Activated CD8-positive, alpha-beta T cell treated with anti-CD3 and anti-CD28 coated beads for 36 hours (primary cell): ENCODE measurements at regions of chr19 and their contacts with region 1.

Region 1: DNA sequence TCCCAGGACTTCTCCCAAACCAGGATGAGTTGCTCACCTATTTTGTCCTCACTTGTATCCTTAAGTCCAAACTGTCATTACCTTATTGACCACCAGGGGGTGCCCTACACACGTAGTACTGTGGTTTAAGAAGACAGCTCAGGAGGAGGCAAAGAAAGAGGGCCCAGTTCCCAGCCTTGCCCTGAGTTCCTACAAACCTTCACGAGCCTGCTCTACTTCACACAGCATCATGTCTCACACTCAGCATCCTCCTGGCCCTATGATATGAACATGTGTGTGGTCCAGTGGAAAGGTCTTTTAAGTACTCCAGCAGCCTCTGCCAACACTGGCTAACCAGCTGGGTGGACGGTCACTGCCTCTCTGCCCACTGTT is 8.1 kb upstream of the ZNF784 start:
- DNase-seq: peak; percentile 98
- ATAC-seq: peak; percentile 55
- H3K4me3 Mint-ChIP-seq: no peak overlapping the region
- H3K27ac Mint-ChIP-seq: peak overlapping the region; percentile 63
- H3K4me1 Mint-ChIP-seq: peaks cover 34% of the 10 kb centered on the region
- H3K27me3 Mint-ChIP-seq: peaks cover 4% of the 10 kb centered on the region
- CTCF ChIP-seq: peak; percentile 75

Region 2: DNA sequence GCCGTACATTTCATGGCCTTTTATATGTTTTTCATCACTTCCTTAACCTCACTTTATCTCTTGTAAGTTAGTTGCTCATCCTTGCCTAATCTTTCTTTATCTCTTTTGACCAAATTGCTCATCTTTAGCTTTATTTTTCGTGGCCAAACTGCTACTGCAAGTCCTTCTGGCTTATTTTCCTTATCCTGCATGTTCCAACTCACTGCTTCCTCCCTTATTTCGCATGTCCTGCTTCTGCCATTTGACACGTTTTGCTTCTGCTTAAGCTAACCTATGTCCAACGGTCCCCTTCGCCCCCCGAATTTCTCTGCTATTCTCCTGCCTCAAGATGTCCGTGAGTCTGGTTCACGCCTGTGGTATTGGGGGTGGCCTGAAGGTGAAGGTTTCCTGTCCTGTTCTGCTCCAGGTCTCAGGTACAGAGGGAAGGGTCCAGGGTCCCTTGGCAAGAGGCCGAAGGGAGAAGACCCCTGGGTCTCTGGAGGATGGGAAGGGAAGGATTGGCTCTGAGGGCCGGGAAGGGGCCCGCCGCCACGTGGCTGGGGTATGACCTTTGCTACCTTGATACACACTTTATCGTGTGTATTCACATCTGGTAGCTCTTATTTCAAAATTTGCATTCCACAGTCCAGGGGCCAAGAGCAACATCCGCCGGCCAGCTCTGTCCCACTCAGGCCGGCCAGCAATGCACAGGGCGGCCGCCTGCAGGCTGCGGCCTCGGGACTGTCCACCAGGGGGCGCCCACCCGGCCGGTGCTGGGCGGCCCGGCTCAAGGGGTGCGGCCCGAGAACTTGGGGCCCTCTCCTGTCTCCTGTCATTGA is 165.0 kb before region 1 on chr19:
- CTCF ChIA-PET with region 1: interaction called, 38 read pairs
- POLR2A ChIA-PET with region 1: no interaction called
- intact Hi-C with region 1: no loop called
- DNase-seq: peak; percentile 69
- ATAC-seq: peak; percentile 98
- H3K4me3 Mint-ChIP-seq: no peak overlapping the region
- H3K27ac Mint-ChIP-seq: no peak overlapping the region
- H3K4me1 Mint-ChIP-seq: peaks cover 5% of the 10 kb centered on the region
- H3K27me3 Mint-ChIP-seq: no peaks in the 10 kb centered on the region
- CTCF ChIP-seq: peak; percentile 98

Region 3: GRCh38 chr19:55516878-55517620 is 115.4 kb before region 1 on chr19:
- CTCF ChIA-PET with region 1: interaction called, 35 read pairs
- POLR2A ChIA-PET with region 1: interaction called, 3 read pairs
- intact Hi-C with region 1: loop called (anchors 5 kb)
- DNase-seq: peak; percentile 94
- ATAC-seq: peak; percentile 100
- H3K4me3 Mint-ChIP-seq: peak overlapping the region; percentile 55
- H3K27ac Mint-ChIP-seq: peak overlapping the region; percentile 51
- H3K4me1 Mint-ChIP-seq: peaks cover 3% of the 10 kb centered on the region
- H3K27me3 Mint-ChIP-seq: no peaks in the 10 kb centered on the region
- CTCF ChIP-seq: peak; percentile 66

Region 4: GRCh38 chr19:55599468-55600279 is 32.8 kb before region 1 on chr19 and contains the start of gene FIZ1:
- CTCF ChIA-PET with region 1: interaction called, 24 read pairs
- POLR2A ChIA-PET with region 1: interaction called, 3 read pairs
- intact Hi-C with region 1: no loop called
- DNase-seq: peak; percentile 98
- ATAC-seq: peak; percentile 74
- H3K4me3 Mint-ChIP-seq: peak within 1 kb of the TSS; percentile 88
- H3K27ac Mint-ChIP-seq: peak within 1 kb of the TSS; percentile 99
- H3K4me1 Mint-ChIP-seq: peaks cover 30% of the 10 kb centered on the region
- H3K27me3 Mint-ChIP-seq: no peaks in the 10 kb centered on the region
- CTCF ChIP-seq: no peak
- total RNA-seq, gene FIZ1: 11.4 to 13.2 TPM

Region 5: DNA sequence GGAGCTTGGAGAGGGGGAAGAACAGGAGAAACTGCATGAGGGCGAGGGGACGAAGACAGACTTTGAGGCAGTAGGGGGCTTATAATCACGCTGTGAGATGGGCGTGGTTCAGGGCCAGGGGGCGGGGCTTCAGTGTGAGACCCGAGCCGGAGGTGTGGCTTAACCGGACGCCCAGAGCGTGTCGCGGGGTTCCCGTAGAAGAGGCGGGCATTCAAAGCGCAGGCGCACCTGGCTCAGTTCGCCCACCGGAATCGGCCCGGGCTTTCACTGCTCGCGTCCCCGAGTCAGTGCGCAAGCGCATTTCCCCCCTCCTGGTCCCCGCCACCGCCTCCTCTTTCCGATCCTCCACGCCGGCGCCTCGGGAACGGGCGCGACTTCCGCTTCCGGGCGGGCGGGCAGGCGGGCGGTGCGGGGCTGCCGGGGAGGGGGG is 27.2 kb before region 1 on chr19:
- CTCF ChIA-PET with region 1: interaction called, 24 read pairs
- POLR2A ChIA-PET with region 1: interaction called, 3 read pairs
- intact Hi-C with region 1: no loop called
- DNase-seq: peak; percentile 99
- ATAC-seq: peak; percentile 86
- H3K4me3 Mint-ChIP-seq: peak overlapping the region; percentile 80
- H3K27ac Mint-ChIP-seq: peak overlapping the region; percentile 91
- H3K4me1 Mint-ChIP-seq: peaks cover 53% of the 10 kb centered on the region
- H3K27me3 Mint-ChIP-seq: no peaks in the 10 kb centered on the region
- CTCF ChIP-seq: no peak

Region 6: GRCh38 chr19:55643348-55644176 is 11.1 kb after region 1 on chr19 and contains the start of gene ZNF581:
- CTCF ChIA-PET with region 1: interaction called, 36 read pairs
- POLR2A ChIA-PET with region 1: interaction called, 6 read pairs
- intact Hi-C with region 1: no loop called
- DNase-seq: peak; percentile 94
- ATAC-seq: peak; percentile 57
- H3K4me3 Mint-ChIP-seq: peak within 1 kb of the TSS; percentile 82
- H3K27ac Mint-ChIP-seq: peak within 1 kb of the TSS; percentile 99
- H3K4me1 Mint-ChIP-seq: peaks cover 44% of the 10 kb centered on the region
- H3K27me3 Mint-ChIP-seq: no peaks in the 10 kb centered on the region
- CTCF ChIP-seq: no peak
- total RNA-seq, gene ZNF581: 30.4 to 34.5 TPM

Region 7: DNA sequence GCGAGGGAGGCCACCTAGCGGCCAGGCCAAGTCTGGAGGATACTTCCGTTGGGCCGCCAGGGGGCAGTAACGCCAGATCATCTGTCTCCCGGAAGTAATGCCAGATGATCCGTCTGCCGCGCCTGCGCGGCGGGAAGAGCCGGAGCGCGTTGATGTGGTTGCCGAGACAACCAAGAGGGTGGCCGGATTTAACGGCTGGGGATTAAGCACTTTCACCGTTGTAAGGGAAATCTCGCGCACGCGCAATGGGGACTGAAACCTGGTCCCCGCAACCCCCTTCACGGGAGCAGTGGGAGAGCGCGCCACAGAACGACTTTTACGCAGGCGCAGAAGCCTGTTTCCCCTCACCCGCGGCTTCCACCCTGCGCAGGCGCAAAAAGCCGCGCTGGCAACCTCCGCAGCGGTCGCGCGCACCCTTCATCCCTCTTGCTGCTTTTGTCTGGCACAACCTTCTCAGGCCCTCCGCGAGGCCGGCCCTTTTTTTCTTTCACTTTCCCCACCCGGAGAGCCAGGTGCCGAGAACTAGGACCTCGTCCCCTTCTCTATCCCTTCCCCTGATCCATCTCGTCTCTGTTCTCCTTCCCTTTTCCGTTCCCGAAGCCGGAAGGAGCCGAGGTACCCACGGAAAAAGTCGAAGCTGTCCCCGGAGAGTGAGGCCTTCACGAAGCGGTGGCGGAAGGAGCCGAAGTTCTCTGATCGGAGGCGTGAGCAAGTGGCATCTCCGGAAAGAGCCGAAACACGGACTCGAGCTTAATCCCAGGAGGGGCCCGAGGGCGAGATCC is 21.5 kb after region 1 on chr19:
- CTCF ChIA-PET with region 1: interaction called, 45 read pairs
- POLR2A ChIA-PET with region 1: interaction called, 4 read pairs
- intact Hi-C with region 1: no loop called
- DNase-seq: peak; percentile 100
- ATAC-seq: peak; percentile 81
- H3K4me3 Mint-ChIP-seq: peak overlapping the region; percentile 98
- H3K27ac Mint-ChIP-seq: peak overlapping the region; percentile 99
- H3K4me1 Mint-ChIP-seq: peaks cover 41% of the 10 kb centered on the region
- H3K27me3 Mint-ChIP-seq: no peaks in the 10 kb centered on the region
- CTCF ChIP-seq: peak; percentile 99